SK-N-SH (cell line): ENCODE measurements at regions of chr9 and their contacts with region 1.

Region 1: GRCh38 chr9:33778700-33779351 is 16.5 kb upstream of the PRSS3 start:
- DNase-seq: peak; percentile 70
- H3K4me3 ChIP-seq: no peak overlapping the region
- H3K27ac ChIP-seq: no peak overlapping the region
- H3K4me1 ChIP-seq: peaks cover 3 to 7% of the 10 kb centered on the region in 2 experiments; a peak in 3 of 4 replicates
- H3K27me3 ChIP-seq: no peaks in the 10 kb centered on the region
- CTCF ChIP-seq: peak; percentile 78
- EP300 ChIP-seq: no peak
- RAD21 ChIP-seq: peak; percentile 77

Region 2: DNA sequence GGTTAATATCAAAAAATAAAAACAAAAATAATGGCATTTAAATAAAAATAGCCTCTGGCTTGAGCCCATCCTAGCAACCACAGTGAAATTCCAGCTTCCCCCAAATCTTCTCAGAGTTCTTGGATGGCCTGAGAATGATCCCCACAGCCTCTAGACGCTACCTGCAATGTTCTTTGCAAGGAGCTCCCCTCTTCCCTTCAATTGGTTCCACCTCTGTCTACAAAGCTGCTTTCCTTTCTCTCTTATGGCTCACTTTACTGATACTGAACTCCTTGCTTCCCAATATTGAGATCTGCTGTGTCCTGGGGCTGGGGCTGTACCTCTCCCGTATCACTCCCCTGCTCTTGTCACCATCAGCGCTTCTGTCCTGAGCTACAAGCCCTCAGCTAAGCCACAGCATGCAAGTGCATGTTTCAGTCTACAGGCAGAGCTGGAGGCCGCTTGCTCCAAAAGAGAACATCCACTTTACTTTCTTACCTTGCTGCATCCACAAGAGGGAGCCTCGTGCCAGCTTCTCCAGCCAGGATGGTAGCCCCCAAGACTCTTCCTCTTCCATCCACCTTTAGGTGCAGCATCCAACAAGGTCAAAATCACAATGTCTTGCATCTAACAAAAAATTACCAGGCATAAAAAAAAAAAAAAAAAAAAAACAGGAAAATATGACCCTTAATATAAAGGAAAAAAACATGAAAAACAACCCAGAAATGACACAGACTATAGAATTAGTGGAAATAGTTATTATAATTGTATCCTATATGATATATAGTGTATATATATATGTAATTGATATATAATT is 40.8 kb before region 1 on chr9:
- CTCF ChIA-PET with region 1: interaction called, 54 read pairs
- POLR2A ChIA-PET with region 1: interaction called, 3 read pairs
- DNase-seq: peak; percentile 59
- H3K4me3 ChIP-seq: no peak overlapping the region
- H3K27ac ChIP-seq: no peak overlapping the region
- H3K4me1 ChIP-seq: peaks cover 0 to 7% of the 10 kb centered on the region in 2 experiments; a peak in 1 of 4 replicates
- H3K27me3 ChIP-seq: no peaks in the 10 kb centered on the region
- CTCF ChIP-seq: peak; percentile 63
- EP300 ChIP-seq: no peak
- RAD21 ChIP-seq: peak; percentile 82

Region 3: GRCh38 chr9:33750307-33750838 is 28.5 kb before region 1 on chr9:
- CTCF ChIA-PET with region 1: interaction called, 26 read pairs
- POLR2A ChIA-PET with region 1: no interaction called
- DNase-seq: peak; percentile 85
- H3K4me3 ChIP-seq: peak overlapping the region; percentile 64 to 71
- H3K27ac ChIP-seq: peak overlapping the region in 1 of 2 experiments; percentile 88; a peak in 2 of 4 replicates
- H3K4me1 ChIP-seq: peaks cover 0 to 14% of the 10 kb centered on the region in 2 experiments; a peak in 2 of 4 replicates
- H3K27me3 ChIP-seq: no peaks in the 10 kb centered on the region
- CTCF ChIP-seq: no peak
- EP300 ChIP-seq: no peak
- RAD21 ChIP-seq: no peak

Region 4: DNA sequence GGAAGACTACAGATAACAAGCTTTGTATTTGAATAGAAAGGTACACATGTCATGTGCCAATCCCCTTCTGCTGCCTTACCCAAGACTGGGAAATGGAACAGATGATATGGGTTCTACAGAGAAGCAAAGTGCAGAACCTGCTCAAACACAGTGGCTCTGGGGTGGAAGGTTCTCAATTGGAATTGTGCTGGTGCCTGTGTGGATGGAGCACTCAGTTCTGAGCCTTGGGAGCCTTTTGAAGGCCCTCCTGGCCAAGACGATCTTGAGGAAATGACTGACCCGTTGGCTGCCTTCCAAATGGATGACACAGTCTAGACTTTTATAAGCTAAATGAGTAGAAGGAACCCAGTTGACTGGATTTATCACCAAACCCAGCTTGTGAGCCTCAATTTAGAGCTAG is 12.3 kb after region 1 on chr9:
- CTCF ChIA-PET with region 1: interaction called, 29 read pairs
- POLR2A ChIA-PET with region 1: no interaction called
- DNase-seq: no peak
- H3K4me3 ChIP-seq: no peak overlapping the region
- H3K27ac ChIP-seq: no peak overlapping the region
- H3K4me1 ChIP-seq: no peaks in the 10 kb centered on the region; a peak in 2 of 4 replicates
- H3K27me3 ChIP-seq: no peaks in the 10 kb centered on the region
- CTCF ChIP-seq: no peak
- EP300 ChIP-seq: no peak
- RAD21 ChIP-seq: no peak

Region 5: DNA sequence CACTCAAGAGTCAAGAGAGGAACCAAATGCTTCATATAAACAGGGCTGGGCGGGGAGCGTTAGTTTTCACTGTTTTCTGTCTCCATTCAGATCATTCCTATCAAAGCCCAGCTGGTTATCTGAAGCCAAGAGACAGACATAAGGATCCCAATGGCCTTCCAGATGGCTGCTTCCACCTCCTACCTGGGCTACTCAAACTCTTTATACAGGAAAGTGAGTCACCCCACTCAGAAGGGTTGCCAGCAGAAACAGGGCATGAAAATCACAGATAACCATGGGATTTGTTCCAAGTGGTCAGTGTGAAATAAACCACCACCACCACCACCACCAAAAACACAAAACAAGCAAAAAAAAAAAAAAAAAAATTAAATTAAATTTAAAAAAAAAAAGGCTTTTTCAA is 22.1 kb after region 1 on chr9:
- CTCF ChIA-PET with region 1: interaction called, 12 read pairs
- POLR2A ChIA-PET with region 1: no interaction called
- DNase-seq: no peak
- H3K4me3 ChIP-seq: no peak overlapping the region
- H3K27ac ChIP-seq: no peak overlapping the region
- H3K4me1 ChIP-seq: peaks cover 0 to 10% of the 10 kb centered on the region in 2 experiments; a peak in 1 of 4 replicates
- H3K27me3 ChIP-seq: no peaks in the 10 kb centered on the region
- CTCF ChIP-seq: no peak
- EP300 ChIP-seq: no peak
- RAD21 ChIP-seq: no peak

Region 6: GRCh38 chr9:33816327-33817252 is 37.8 kb after region 1 on chr9 and contains the start of gene UBE2R2:
- CTCF ChIA-PET with region 1: interaction called, 21 read pairs
- POLR2A ChIA-PET with region 1: no interaction called
- DNase-seq: peak; percentile 99
- H3K4me3 ChIP-seq: peak within 1 kb of the TSS; percentile 69 to 78
- H3K27ac ChIP-seq: peak within 1 kb of the TSS; percentile 92 to 95
- H3K4me1 ChIP-seq: peaks cover 7 to 21% of the 10 kb centered on the region in 2 experiments; a peak in 3 of 4 replicates
- H3K27me3 ChIP-seq: no peaks in the 10 kb centered on the region
- CTCF ChIP-seq: no peak
- EP300 ChIP-seq: peak; percentile 17 to 29; a peak in 2 of 4 replicates
- RAD21 ChIP-seq: no peak
- polyA plus RNA-seq, gene UBE2R2: 16.4 and 19.7 TPM in 2 replicates